Activated CD8-positive, alpha-beta T cell treated with anti-CD3 and anti-CD28 coated beads for 36 hours (primary cell): ENCODE measurements at regions of chr3 and their contacts with region 1.

Region 1: DNA sequence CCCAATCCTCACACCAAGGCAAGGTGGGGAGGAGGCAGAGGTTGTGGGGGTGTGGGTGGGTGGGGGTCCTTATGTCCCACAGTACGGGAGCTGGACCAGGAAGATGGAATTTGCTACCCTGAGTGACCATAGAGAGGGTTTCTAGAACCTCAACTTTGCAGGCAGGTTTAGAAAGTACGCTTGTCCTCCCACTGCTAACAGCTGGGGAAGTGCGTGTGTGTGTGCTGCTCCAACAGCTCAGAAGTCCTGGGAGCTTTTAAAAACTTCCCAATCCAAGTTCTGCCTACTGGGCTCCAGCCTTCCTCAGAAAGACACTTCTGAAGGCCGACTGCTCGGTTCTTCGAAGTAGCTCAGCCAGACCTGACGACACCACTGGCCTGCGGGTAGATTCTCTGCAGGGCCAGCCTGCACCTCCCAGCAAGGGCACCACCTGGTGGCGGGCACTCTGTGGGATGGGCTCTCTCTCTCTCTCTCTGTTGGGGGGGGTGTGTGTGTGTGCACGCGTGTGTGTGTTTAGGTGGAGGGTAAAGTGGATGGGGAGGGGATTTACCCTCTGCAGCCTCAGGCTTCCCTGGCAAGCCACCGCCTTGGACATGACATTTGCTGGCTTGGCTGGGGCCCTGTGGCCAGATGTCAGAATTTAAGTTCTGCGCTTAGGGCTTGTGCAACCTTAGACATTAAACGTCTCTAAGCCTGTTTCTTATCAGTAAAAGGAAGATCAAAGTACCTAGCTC is 15.6 kb downstream of the TMEM158 start:
- DNase-seq: peak; percentile 83
- ATAC-seq: peak; percentile 94
- H3K4me3 Mint-ChIP-seq: no peak overlapping the region
- H3K27ac Mint-ChIP-seq: no peak overlapping the region
- H3K4me1 Mint-ChIP-seq: peaks cover 6% of the 10 kb centered on the region
- H3K27me3 Mint-ChIP-seq: peaks cover 11% of the 10 kb centered on the region
- CTCF ChIP-seq: peak; percentile 71

Region 2: GRCh38 chr3:45118615-45119071 is 91.8 kb before region 1 on chr3:
- CTCF ChIA-PET with region 1: interaction called, 12 read pairs
- POLR2A ChIA-PET with region 1: no interaction called
- intact Hi-C with region 1: no loop called
- DNase-seq: peak; percentile 51
- ATAC-seq: peak; percentile 51
- H3K4me3 Mint-ChIP-seq: peak overlapping the region; percentile 7
- H3K27ac Mint-ChIP-seq: peak overlapping the region; percentile 69
- H3K4me1 Mint-ChIP-seq: peaks cover 40% of the 10 kb centered on the region
- H3K27me3 Mint-ChIP-seq: no peaks in the 10 kb centered on the region
- CTCF ChIP-seq: no peak

Region 3: DNA sequence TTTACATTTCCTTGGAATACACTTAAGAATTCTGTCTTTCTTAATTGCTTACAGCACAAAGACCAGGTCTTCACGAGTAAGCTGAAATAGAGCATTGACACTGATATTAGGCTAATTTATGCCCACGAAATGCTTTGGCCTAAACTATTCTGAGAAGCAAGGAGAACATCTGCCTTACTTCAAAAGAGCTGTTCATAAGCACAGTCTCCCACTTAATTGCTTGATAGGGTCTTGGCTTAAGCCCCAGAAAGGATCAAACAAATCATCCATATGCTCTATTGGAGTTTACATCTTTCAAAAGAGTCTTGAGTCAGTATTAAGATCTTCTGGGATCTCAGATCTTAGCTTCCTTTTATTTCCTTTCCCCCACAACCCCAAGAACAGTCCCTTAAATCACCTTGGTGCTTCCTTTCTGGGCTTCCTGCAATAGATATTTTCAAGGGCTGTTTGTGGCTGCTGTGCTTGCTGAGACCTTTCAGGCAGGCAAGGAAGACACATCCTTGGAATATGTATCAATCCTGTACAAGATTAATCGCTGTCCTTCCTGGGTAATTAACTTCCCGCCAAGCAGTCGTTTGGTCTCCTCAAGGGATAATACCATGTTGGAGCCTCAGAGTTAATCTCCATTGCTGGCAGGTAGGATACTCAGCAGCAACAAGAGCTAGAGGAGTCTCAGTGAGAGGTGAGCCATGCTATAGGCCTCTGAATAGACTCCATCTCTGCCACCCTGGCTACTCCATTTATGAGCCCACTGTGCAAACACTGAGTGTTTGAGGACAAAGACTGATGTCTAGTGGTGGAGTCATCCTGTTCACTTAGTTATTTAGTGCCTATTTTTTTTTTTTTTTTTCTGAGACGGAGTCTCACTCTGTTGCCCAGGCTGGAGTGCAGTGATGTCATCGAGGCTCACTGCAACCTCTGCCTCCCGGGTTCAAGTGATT is 21.5 kb before region 1 on chr3:
- CTCF ChIA-PET with region 1: interaction called, 16 read pairs
- POLR2A ChIA-PET with region 1: no interaction called
- intact Hi-C with region 1: no loop called
- DNase-seq: no peak
- ATAC-seq: no peak
- H3K4me3 Mint-ChIP-seq: no peak overlapping the region
- H3K27ac Mint-ChIP-seq: no peak overlapping the region
- H3K4me1 Mint-ChIP-seq: peaks cover 7% of the 10 kb centered on the region
- H3K27me3 Mint-ChIP-seq: peaks cover 2% of the 10 kb centered on the region
- CTCF ChIP-seq: no peak